CD8-positive, alpha-beta memory T cell (primary cell): ENCODE measurements at regions of chr1 and their contacts with region 1.

Region 1: DNA sequence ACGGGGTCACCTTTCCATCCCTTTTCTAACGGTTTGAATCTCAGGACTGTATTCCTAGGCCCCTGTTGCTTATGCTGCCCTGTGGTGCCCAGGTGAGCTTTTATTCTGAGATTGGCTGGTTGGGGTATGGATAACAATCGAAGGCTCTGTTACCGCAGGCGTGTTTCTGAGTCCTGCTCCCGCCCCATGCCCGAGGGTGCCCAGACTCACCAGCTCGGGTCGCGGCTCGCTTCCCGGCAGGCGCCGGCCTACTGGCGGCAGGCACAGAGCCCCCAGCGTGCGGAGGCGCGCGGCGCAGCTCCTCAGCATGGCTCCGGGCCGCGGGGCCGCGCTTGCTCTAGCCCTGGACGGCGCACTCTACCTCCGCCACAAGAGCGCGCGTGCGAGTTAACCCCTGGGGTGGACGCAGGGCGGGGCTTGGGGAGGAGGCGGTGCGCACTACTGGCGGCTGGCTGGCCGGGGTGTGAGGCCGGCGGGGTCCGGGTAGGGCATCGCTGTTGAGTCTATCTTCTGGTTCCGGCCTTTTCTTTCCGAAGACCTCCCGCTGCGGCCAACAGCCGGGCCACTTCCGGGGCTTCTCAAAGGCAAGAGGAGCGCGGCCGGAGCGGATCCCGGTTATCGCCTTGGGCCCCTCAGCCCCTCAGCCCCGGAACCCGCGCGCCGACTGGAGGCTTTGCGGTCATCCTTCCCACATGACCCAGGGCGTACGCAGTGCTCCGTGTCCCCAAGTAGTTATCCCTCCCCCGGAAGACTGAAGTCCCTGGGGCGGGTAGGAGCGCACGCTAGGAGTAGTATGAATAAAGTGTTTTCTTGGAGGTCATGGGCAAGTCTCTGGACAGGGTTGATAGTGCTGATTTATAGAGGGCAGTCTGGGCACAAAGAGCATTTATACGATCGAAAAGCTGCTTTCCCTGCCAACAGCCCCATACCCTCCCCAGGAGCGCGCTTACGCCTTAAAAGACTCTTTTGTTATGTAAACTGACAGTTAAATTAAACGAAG is at the start of gene THEM4:
- DNase-seq: peak; percentile 77 to 91 (median 82)
- H3K4me3 ChIP-seq: peak within 1 kb of the TSS; percentile 79
- H3K4me3 Mint-ChIP-seq: peak within 1 kb of the TSS; percentile 80 to 94 (median 84)
- H3K27ac ChIP-seq: peak within 1 kb of the TSS; percentile 75
- H3K27ac Mint-ChIP-seq: peak within 1 kb of the TSS; percentile 81 to 98 (median 86)
- H3K4me1 ChIP-seq: peaks cover 46% of the 10 kb centered on the region
- H3K4me1 Mint-ChIP-seq: peaks cover 38 to 48% (median 45%) of the 10 kb centered on the region in 3 donors
- H3K27me3 ChIP-seq: no peaks in the 10 kb centered on the region
- H3K27me3 Mint-ChIP-seq: no peaks in the 10 kb centered on the region
- total RNA-seq, gene THEM4: 31.4 to 31.7 TPM

Region 2: GRCh38 chr1:151898513-151898991 is 10.9 kb before region 1 on chr1:
- CTCF ChIA-PET with region 1: interaction called, 10 read pairs
- POLR2A ChIA-PET with region 1: interaction called, 9 read pairs
- DNase-seq: peak; percentile 26 to 81 (median 73)
- H3K4me3 ChIP-seq: peak overlapping the region; percentile 40
- H3K4me3 Mint-ChIP-seq: peak overlapping the region; percentile 55 to 82 (median 73)
- H3K27ac ChIP-seq: no peak overlapping the region
- H3K27ac Mint-ChIP-seq: peak overlapping the region; percentile 81 to 98 (median 93)
- H3K4me1 ChIP-seq: peaks cover 55% of the 10 kb centered on the region
- H3K4me1 Mint-ChIP-seq: peaks cover 55 to 72% (median 70%) of the 10 kb centered on the region in 3 donors
- H3K27me3 ChIP-seq: no peaks in the 10 kb centered on the region
- H3K27me3 Mint-ChIP-seq: no peaks in the 10 kb centered on the region

Region 3: DNA sequence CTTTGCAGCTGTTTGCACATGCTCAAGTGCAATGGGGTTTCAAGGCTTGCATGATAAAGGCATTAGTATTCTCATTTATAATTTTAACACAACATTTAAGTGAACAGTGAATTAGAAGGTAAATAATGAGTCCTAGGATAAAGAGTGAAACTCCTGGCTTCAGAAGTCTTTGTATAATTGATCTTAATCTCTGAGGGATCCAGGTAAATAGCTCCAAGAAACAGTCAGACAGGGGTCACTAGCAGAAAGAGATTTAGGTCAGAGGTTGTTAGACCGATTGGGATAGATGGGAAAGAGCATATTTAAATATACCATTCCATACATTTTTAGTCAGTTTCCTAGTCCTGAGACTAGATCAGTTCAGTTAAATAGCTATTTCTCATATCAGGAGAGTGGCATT is 14.0 kb after region 1 on chr1:
- CTCF ChIA-PET with region 1: no interaction called
- POLR2A ChIA-PET with region 1: no interaction called
- DNase-seq: no peak
- H3K4me3 ChIP-seq: no peak overlapping the region
- H3K4me3 Mint-ChIP-seq: no peak overlapping the region
- H3K27ac ChIP-seq: no peak overlapping the region
- H3K27ac Mint-ChIP-seq: no peak overlapping the region
- H3K4me1 ChIP-seq: peaks cover 10% of the 10 kb centered on the region
- H3K4me1 Mint-ChIP-seq: peaks cover 6 to 13% (median 12%) of the 10 kb centered on the region in 3 donors
- H3K27me3 ChIP-seq: no peaks in the 10 kb centered on the region
- H3K27me3 Mint-ChIP-seq: no peaks in the 10 kb centered on the region